ENCODE measurements at regions of chr3 and their contacts with region 1.

Region 1: GRCh38 chr3:82133070-82133606 is 371.7 kb upstream of the GBE1 start:
- DNase-seq: peak; percentile 69 to 76 (median 74)
- ATAC-seq: peak; percentile 93
- H3K4me3 ChIP-seq: no peak overlapping the region
- H3K27ac ChIP-seq: no peak overlapping the region
- H3K4me1 ChIP-seq: no peaks in the 10 kb centered on the region
- H3K27me3 ChIP-seq: no peaks in the 10 kb centered on the region
- CTCF ChIP-seq: peak; percentile 64 to 75 (median 72)
- POLR2A ChIP-seq: no peak

Region 2: DNA sequence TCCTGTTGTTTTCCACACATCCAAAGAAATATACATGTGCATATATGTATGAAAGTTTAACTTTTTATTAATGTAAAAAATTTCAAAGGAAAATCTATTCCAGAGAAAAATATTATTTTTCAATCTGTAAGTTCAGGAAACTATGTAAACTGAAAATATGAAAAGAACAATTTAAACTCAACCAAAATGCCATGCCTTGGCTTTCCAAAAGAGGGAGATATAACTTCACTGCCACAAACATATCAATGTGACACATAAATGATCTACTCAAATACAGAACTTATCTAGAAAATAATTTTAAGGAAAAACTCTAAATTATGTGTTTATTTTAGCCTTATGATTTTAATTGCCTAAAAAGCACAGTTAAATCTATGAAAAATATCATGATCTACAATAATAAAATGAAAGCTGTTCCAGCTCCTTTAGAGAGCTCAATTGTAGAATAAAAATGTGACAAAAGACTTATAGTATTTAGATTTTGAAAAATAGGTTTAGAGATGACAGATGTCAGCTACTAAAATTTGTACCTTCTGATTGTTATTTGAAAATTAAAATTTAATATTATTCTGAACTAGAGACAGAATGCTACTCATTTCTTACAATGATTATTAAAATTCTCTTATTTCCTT is 466.5 kb before region 1 on chr3:
- intact Hi-C with region 1: loop called (anchors 10 kb)
- DNase-seq: no peak
- ATAC-seq: no peak
- H3K4me3 ChIP-seq: no peak overlapping the region
- H3K27ac ChIP-seq: no peak overlapping the region
- H3K4me1 ChIP-seq: peaks cover 6% of the 10 kb centered on the region
- H3K27me3 ChIP-seq: no peaks in the 10 kb centered on the region
- CTCF ChIP-seq: peak; percentile 38 to 88 (median 71)
- POLR2A ChIP-seq: no peak

Region 3: GRCh38 chr3:82654708-82655107 is 521.6 kb after region 1 on chr3:
- intact Hi-C with region 1: no loop called
- DNase-seq: no peak
- ATAC-seq: no peak
- H3K4me3 ChIP-seq: no peak overlapping the region
- H3K27ac ChIP-seq: no peak overlapping the region
- H3K4me1 ChIP-seq: no peaks in the 10 kb centered on the region
- H3K27me3 ChIP-seq: no peaks in the 10 kb centered on the region
- CTCF ChIP-seq: no peak
- POLR2A ChIP-seq: no peak

Measured in body of pancreas (tissue), 4 donors.